MCF 10A (cell line): ENCODE measurements at regions of chr12 and their contacts with region 1.

Region 1: DNA sequence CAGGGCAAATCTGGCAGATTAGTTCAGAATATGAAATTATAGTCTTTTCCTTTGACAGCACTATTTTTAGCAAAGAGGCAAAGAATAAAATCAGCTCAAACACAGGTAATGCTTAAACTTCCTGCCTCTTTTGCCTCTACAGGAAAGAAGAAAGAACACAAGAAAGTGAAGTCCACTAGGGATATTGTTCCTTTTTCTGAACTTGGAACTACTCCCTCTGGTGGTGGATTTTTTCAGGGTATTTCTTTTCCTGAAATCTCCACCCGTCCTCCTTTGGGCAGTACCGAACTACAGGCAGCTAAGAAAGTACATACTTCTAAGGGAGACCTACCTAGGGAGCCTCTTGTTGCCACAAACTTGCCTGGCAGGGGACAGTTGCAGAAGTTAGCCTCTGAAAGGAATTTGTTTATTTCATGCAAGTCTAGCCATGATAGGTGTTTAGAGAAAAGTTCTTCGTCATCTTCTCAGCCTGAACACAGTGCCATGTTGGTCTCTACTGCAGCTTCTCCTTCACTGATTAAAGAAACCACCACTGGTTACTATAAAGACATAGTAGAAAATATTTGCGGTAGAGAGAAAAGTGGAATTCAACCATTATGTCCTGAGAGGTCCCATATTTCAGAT is 17.4 kb downstream of the TMPO start:
- DNase-seq: peak; percentile 70
- H3K4me3 Mint-ChIP-seq: no peak overlapping the region
- H3K27ac Mint-ChIP-seq: no peak overlapping the region
- H3K4me1 Mint-ChIP-seq: no peaks in the 10 kb centered on the region
- H3K27me3 Mint-ChIP-seq: no peaks in the 10 kb centered on the region
- CTCF ChIP-seq: peak; percentile 62

Region 2: GRCh38 chr12:98550803-98551202 is 18.0 kb after region 1 on chr12:
- CTCF ChIA-PET with region 1: interaction called, 10 read pairs
- POLR2A ChIA-PET with region 1: no interaction called
- intact Hi-C with region 1: no loop called
- DNase-seq: no peak
- H3K4me3 Mint-ChIP-seq: no peak overlapping the region
- H3K27ac Mint-ChIP-seq: no peak overlapping the region
- H3K4me1 Mint-ChIP-seq: no peaks in the 10 kb centered on the region
- H3K27me3 Mint-ChIP-seq: no peaks in the 10 kb centered on the region
- CTCF ChIP-seq: no peak